WTC11 (cell line): ENCODE measurements at regions of chr15 and their contacts with region 1.

Region 1: GRCh38 chr15:63048115-63048775 is 5.7 kb downstream of the TPM1 start:
- DNase-seq: peak; percentile 95
- ATAC-seq: peak; percentile 70
- H3K4me3 Mint-ChIP-seq: peak overlapping the region; percentile 90
- H3K27ac Mint-ChIP-seq: no peak overlapping the region
- H3K4me1 Mint-ChIP-seq: peaks cover 80% of the 10 kb centered on the region
- H3K27me3 Mint-ChIP-seq: no peaks in the 10 kb centered on the region
- CTCF ChIP-seq: peak; percentile 94

Region 2: DNA sequence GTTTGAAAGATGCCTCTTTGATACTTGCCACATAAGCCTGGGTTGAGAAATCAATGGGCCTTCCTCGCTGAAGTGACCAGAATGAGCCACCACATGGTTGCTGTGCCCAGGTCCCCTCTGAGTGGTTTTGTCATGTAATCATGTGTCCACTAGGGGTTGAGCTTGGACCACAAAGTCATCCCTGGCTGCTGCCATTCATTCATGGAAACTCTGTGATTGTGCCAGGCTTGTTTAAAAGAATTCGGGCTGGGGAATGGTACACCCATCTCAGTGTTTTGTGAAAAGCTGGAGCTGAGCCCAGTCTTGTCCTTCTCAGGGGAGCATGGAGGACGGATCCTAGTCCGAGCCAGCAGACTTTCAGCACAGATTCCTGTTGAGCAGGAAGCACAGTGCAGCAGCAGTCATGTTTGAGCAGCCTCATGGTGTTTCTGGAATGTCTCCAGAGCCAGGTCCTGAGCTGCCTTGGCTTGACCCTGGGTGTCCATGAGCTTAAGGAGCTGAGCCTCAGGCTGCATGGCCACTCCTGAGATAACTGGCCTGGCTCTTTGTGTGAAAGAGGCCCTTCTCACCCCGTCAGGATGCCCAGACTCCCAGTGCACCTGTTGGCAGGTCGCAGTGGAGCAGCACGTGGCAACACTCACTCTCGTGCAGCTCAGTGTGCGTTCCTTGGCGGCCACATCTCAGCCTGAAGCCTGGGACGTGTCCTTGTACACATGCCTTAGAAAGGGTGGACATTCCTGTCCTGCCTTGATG is 266.0 kb before region 1 on chr15:
- CTCF ChIA-PET with region 1: interaction called, 18 read pairs
- POLR2A ChIA-PET with region 1: interaction called, 3 read pairs
- DNase-seq: peak; percentile 45
- ATAC-seq: peak; percentile 86
- H3K4me3 Mint-ChIP-seq: no peak overlapping the region
- H3K27ac Mint-ChIP-seq: no peak overlapping the region
- H3K4me1 Mint-ChIP-seq: peaks cover 6% of the 10 kb centered on the region
- H3K27me3 Mint-ChIP-seq: no peaks in the 10 kb centered on the region
- CTCF ChIP-seq: no peak

Region 3: DNA sequence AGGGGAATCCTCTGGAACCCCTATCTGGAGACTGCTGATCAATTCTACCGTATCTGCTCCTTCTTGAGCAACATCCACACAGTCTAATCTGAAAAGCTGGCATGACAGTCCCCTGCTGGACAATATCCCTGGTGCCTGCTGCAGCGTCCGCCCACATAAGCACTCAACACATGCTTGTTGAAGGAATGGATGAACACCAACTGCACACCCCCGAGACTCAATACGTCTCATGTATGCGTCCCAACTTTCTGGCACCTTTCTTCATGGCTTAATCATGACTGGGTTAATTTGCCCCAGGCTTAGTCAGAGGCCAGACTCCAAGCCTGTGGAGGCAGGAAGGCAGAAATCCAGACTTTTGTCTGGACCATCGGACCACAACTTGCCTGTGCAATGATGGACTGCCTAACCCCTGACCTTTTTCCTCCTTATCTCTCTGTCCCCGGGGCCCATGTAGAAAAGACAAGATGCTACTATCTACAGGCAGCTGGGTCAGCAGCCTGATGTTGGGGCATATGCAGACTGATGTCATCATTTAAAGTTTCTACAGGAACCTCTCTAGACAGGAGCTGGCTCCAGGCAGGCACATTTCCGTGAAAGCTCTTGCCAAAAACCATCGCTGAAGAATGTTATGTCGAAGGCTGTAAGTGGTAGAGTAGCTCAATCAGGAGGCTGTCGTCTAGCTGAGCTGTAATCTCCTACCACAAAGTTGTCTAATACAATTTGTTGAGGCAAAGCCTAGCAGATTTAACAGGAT is 119.8 kb before region 1 on chr15:
- CTCF ChIA-PET with region 1: no interaction called
- POLR2A ChIA-PET with region 1: no interaction called
- DNase-seq: no peak
- ATAC-seq: no peak
- H3K4me3 Mint-ChIP-seq: no peak overlapping the region
- H3K27ac Mint-ChIP-seq: no peak overlapping the region
- H3K4me1 Mint-ChIP-seq: no peaks in the 10 kb centered on the region
- H3K27me3 Mint-ChIP-seq: no peaks in the 10 kb centered on the region
- CTCF ChIP-seq: no peak

Region 4: DNA sequence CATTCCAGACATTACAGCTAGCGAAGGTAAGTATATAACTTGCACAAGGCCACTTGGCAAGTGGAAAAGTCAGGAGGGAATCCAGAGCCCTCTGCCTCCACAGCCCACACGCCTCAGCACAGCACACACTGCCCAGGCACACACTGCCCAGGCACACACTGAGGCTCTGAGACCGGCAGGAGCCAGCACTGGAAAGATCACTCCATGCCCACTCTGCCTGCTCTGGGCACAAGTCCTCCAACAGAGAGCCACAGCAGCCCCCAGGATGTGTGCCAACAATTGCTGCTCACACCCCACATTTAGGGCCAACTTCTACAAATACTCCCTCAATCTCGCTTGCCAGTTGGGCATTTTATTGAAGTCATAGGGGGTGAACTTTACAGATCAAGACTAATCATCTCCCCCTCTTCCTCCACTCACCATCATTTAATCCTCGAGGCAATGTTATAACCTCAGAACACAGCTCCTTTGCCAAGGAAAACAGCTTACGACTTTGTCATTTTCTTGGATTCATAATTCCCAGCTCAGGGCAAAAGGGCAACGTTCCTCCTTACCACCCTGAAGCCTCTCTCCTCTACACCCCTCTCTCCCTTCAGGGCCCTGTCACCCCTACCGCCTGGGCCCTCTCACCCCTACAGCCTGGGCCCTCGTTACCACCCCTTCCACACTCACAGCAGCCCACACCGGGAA is 58.7 kb before region 1 on chr15:
- CTCF ChIA-PET with region 1: interaction called, 10 read pairs
- POLR2A ChIA-PET with region 1: no interaction called
- DNase-seq: no peak
- ATAC-seq: no peak
- H3K4me3 Mint-ChIP-seq: no peak overlapping the region
- H3K27ac Mint-ChIP-seq: no peak overlapping the region
- H3K4me1 Mint-ChIP-seq: peaks cover 31% of the 10 kb centered on the region
- H3K27me3 Mint-ChIP-seq: no peaks in the 10 kb centered on the region
- CTCF ChIP-seq: no peak

Region 5: GRCh38 chr15:63030101-63030551 is 18.1 kb before region 1 on chr15:
- CTCF ChIA-PET with region 1: interaction called, 18 read pairs
- POLR2A ChIA-PET with region 1: interaction called, 5 read pairs
- DNase-seq: no peak
- ATAC-seq: 0 out of 2 replicates have a peak, but pooled peaks have one; percentile 32
- H3K4me3 Mint-ChIP-seq: no peak overlapping the region
- H3K27ac Mint-ChIP-seq: no peak overlapping the region
- H3K4me1 Mint-ChIP-seq: no peaks in the 10 kb centered on the region
- H3K27me3 Mint-ChIP-seq: no peaks in the 10 kb centered on the region
- CTCF ChIP-seq: no peak

Region 6: GRCh38 chr15:63065262-63066221 is 17.3 kb after region 1 on chr15:
- CTCF ChIA-PET with region 1: interaction called, 10 read pairs
- POLR2A ChIA-PET with region 1: interaction called, 5 read pairs
- DNase-seq: no peak
- ATAC-seq: no peak
- H3K4me3 Mint-ChIP-seq: no peak overlapping the region
- H3K27ac Mint-ChIP-seq: peak overlapping the region; percentile 42; the same call in 1 of the 2 replicates
- H3K4me1 Mint-ChIP-seq: peaks cover 11% of the 10 kb centered on the region
- H3K27me3 Mint-ChIP-seq: no peaks in the 10 kb centered on the region
- CTCF ChIP-seq: no peak

Region 7: GRCh38 chr15:63083044-63083443 is 34.8 kb after region 1 on chr15:
- CTCF ChIA-PET with region 1: interaction called, 61 read pairs
- POLR2A ChIA-PET with region 1: interaction called, 21 read pairs
- DNase-seq: no peak
- ATAC-seq: peak; percentile 28
- H3K4me3 Mint-ChIP-seq: no peak overlapping the region
- H3K27ac Mint-ChIP-seq: peak overlapping the region; percentile 48
- H3K4me1 Mint-ChIP-seq: peaks cover 72% of the 10 kb centered on the region
- H3K27me3 Mint-ChIP-seq: no peaks in the 10 kb centered on the region; the same call in 1 of the 2 replicates
- CTCF ChIP-seq: no peak

Region 8: DNA sequence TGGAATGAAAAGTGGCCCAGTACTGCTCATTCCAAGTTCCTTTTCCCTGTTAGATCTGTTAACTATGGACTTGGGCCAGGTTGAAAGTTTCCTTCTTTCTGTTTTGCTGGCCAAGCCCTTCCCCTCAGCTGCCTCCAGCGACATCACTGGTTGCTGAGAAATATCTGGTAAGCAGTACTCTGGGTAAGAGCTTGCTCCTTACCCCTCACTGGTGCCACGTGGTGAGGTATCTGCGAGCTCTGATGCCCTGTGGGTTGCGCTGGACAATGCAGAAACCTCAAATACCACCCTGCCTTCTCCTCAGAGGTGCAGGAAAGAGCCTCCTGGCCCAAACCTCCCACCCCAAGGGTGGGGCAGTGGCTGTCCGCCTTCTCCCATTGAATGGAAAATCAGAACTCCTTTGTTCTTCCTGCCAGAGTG is 186.2 kb after region 1 on chr15:
- CTCF ChIA-PET with region 1: no interaction called
- POLR2A ChIA-PET with region 1: no interaction called
- DNase-seq: no peak
- ATAC-seq: no peak
- H3K4me3 Mint-ChIP-seq: no peak overlapping the region
- H3K27ac Mint-ChIP-seq: peak overlapping the region; percentile 18
- H3K4me1 Mint-ChIP-seq: peaks cover 23% of the 10 kb centered on the region
- H3K27me3 Mint-ChIP-seq: no peaks in the 10 kb centered on the region
- CTCF ChIP-seq: no peak